PC-3 (cell line): ENCODE measurements at regions of chr1 and their contacts with region 1.

Region 1: GRCh38 chr1:42766741-42767509 is at the starts of genes C1orf50 and P3H1:
- DNase-seq: peak; percentile 99
- ATAC-seq: peak; percentile 93
- H3K4me3 ChIP-seq: peak within 1 kb of the TSS; percentile 89
- H3K27ac ChIP-seq: no peak within 1 kb of the TSS
- H3K4me1 ChIP-seq: peaks cover 22% of the 10 kb centered on the region
- H3K27me3 ChIP-seq: no peaks in the 10 kb centered on the region
- CTCF ChIP-seq: no peak
- total RNA-seq, gene C1orf50: 3.4 and 4.1 TPM in 2 replicates
- total RNA-seq, gene P3H1: 28.2 and 28.3 TPM in 2 replicates

Region 2: DNA sequence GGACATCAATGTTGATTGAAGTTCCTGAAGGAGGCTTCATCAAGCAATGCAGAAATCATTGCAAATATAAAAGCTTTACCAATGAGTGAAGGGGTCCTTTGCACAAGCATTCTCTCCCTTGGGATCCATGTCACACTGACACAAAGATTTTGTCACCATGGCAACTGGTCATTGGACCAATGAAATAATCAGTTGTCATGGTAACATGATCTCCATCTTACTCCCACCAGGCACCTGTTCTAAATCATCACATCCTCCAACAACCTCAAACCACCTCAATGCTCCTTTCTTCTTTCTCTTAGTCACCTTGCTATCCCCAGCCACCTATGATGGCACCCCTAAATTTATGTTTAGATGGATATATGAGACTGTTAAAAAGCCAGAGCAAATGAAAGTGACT is 418.4 kb before region 1 on chr1:
- CTCF ChIA-PET with region 1: interaction called, 14 read pairs
- POLR2A ChIA-PET with region 1: no interaction called
- intact Hi-C with region 1: no loop called
- DNase-seq: no peak
- ATAC-seq: no peak
- H3K4me3 ChIP-seq: no peak overlapping the region
- H3K27ac ChIP-seq: no peak overlapping the region
- H3K4me1 ChIP-seq: no peaks in the 10 kb centered on the region
- H3K27me3 ChIP-seq: no peaks in the 10 kb centered on the region
- CTCF ChIP-seq: no peak

Region 3: GRCh38 chr1:42576935-42577334 is 190.0 kb before region 1 on chr1:
- CTCF ChIA-PET with region 1: no interaction called
- POLR2A ChIA-PET with region 1: no interaction called
- intact Hi-C with region 1: loop called (anchors 10 kb)
- DNase-seq: no peak
- ATAC-seq: no peak
- H3K4me3 ChIP-seq: no peak overlapping the region
- H3K27ac ChIP-seq: no peak overlapping the region
- H3K4me1 ChIP-seq: no peaks in the 10 kb centered on the region
- H3K27me3 ChIP-seq: no peaks in the 10 kb centered on the region
- CTCF ChIP-seq: no peak

Region 4: GRCh38 chr1:42681741-42682483 is 85.0 kb before region 1 on chr1 and contains the start of gene YBX1:
- CTCF ChIA-PET with region 1: interaction called, 6 read pairs
- POLR2A ChIA-PET with region 1: no interaction called
- intact Hi-C with region 1: loop called (anchors 1 kb)
- DNase-seq: peak; percentile 98
- ATAC-seq: peak; percentile 89
- H3K4me3 ChIP-seq: peak within 1 kb of the TSS; percentile 79
- H3K27ac ChIP-seq: peak within 1 kb of the TSS; percentile 68
- H3K4me1 ChIP-seq: peaks cover 38% of the 10 kb centered on the region
- H3K27me3 ChIP-seq: no peaks in the 10 kb centered on the region
- CTCF ChIP-seq: no peak
- total RNA-seq, gene YBX1: 1,259 and 1,468 TPM in 2 replicates

Region 5: DNA sequence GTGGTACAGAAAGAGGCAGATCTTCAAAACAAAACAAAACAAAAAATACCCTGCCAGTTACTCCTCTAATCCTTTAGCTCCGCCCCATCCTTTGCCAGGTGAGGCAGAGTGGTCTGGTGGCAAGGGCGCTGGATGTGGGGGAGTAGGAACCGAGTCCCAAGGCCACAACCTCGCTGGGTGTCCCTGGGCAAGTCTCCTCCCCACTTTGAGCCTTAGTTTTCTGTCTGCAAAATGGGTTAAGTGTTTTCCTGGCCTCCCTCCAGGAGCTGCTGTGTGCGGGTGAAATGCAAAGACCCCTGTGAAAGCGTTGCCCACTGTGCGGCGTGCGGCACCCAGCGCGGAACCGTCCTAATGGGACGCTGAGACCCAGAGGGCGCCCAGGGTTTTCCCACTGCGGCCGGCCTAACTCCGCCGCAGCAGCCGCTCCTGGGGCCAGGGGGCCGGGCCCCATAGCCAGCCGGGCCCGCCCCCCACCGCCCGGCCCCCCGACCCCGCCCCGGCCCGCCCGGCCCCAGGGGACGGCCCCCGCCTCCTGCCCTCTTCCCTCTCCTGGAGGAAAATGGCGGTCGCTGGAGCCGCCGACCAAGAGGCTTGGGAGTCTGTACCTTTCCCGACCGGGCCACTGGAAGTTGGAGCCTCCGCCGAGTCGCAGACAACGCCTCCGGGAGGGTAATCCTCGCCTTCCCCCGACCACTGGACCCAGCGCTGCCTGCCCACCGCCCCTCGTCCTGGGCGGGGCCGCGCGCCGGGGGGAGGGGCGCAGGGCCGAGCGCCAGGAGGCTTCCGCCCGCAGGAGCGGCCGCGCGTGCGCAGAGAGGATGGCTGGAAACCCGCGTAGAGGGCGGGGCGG is 49.9 kb after region 1 on chr1 and contains the starts of genes ERMAP and SVBP:
- CTCF ChIA-PET with region 1: no interaction called
- POLR2A ChIA-PET with region 1: interaction called, 4 read pairs
- intact Hi-C with region 1: loop called (anchors 5 kb)
- DNase-seq: peak; percentile 83
- ATAC-seq: peak; percentile 91
- H3K4me3 ChIP-seq: peak within 1 kb of the TSS; percentile 86
- H3K27ac ChIP-seq: peak within 1 kb of the TSS; percentile 97
- H3K4me1 ChIP-seq: peaks cover 14% of the 10 kb centered on the region
- H3K27me3 ChIP-seq: no peaks in the 10 kb centered on the region
- CTCF ChIP-seq: no peak
- total RNA-seq, gene ERMAP: 5.4 and 5.8 TPM in 2 replicates
- total RNA-seq, gene SVBP: 32.7 and 39.7 TPM in 2 replicates

Region 6: DNA sequence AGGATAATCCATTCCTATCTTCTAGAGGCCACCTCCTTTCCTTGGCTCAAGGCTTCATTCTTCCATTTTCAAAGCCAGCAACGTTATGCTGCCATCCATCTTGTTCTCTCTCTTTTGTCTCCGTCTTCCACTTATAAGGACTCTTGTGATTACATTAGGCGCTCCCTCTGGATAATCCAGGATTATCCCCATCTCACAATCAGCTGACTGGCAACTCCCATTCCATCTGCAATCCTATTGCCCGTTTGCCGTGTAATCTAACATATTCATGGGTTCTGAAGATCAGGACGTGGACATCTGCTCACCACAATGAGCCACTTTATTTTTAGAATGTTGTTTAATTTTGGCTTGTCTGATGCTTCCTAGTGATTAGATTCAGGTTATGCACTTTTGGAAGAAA is 315.8 kb after region 1 on chr1:
- CTCF ChIA-PET with region 1: no interaction called
- POLR2A ChIA-PET with region 1: no interaction called
- intact Hi-C with region 1: no loop called
- DNase-seq: no peak
- ATAC-seq: no peak
- H3K4me3 ChIP-seq: no peak overlapping the region
- H3K27ac ChIP-seq: no peak overlapping the region
- H3K4me1 ChIP-seq: no peaks in the 10 kb centered on the region
- H3K27me3 ChIP-seq: no peaks in the 10 kb centered on the region
- CTCF ChIP-seq: no peak